Common myeloid progenitor, CD34-positive (primary cell): ENCODE measurements at regions of chr14 and their contacts with region 1.

Region 1: DNA sequence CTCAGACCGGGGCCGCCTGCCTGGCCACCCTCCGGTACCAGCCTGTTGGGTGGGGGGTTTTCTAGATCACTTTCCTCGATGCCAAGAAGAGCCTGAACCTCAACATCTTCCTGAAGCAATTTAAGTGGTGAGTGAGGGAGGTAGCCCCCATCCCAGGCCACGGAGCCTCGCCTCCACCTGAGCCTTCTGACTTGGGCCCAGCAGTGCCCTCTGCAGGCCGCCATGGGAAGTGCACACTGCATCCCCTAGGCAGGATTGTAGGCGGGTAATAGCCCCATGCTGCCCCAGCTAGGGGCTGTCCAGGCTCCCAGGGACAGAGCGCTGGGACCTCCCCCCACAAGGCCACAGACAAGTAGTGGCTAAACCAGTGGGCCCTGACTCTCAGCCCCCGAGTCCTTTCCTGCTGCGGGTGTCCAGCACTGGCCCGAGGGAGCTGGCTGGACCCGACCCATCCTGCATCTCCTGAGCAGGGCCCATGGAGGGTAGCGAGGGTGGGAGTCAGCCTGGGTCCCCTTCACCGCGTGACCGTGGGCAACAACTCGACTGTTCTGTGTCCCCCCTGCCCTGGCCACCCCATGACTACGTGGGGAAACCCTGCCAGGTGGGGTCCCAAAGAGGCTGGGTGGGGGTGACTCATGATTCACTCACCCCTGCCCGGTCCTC is 15.3 kb upstream of the ADSS1 start:
- DNase-seq: peak; percentile 67 to 81 (median 75)
- H3K4me3 ChIP-seq: no peak overlapping the region
- H3K27ac ChIP-seq: no peak overlapping the region
- H3K4me1 ChIP-seq: peaks cover 0 to 12% (median under 1%) of the 10 kb centered on the region in 4 experiments
- H3K27me3 ChIP-seq: no peaks in the 10 kb centered on the region

Region 2: GRCh38 chr14:104650057-104650981 is 58.4 kb before region 1 on chr14:
- CTCF ChIA-PET with region 1: interaction called, 13 read pairs
- POLR2A ChIA-PET with region 1: no interaction called
- DNase-seq: peak; percentile 72 to 81 (median 76)
- H3K4me3 ChIP-seq: peak overlapping the region; percentile 13 to 79 (median 64)
- H3K27ac ChIP-seq: no peak overlapping the region
- H3K4me1 ChIP-seq: peaks cover 0 to 24% (median 18%) of the 10 kb centered on the region in 4 experiments
- H3K27me3 ChIP-seq: no peaks in the 10 kb centered on the region

Region 3: GRCh38 chr14:104657101-104657524 is 51.6 kb before region 1 on chr14:
- CTCF ChIA-PET with region 1: interaction called, 13 read pairs
- POLR2A ChIA-PET with region 1: interaction called, 3 read pairs
- DNase-seq: peak; percentile 78 to 94 (median 91)
- H3K4me3 ChIP-seq: peak overlapping the region in 1 of 7 experiments; percentile 10
- H3K27ac ChIP-seq: no peak overlapping the region
- H3K4me1 ChIP-seq: peaks cover 3 to 56% (median 48%) of the 10 kb centered on the region in 4 experiments
- H3K27me3 ChIP-seq: no peaks in the 10 kb centered on the region

Region 4: GRCh38 chr14:104665657-104666522 is 42.8 kb before region 1 on chr14:
- CTCF ChIA-PET with region 1: interaction called, 10 read pairs
- POLR2A ChIA-PET with region 1: interaction called, 3 read pairs
- DNase-seq: peak in 2 of 3 donors; percentile 49 to 58
- H3K4me3 ChIP-seq: peak overlapping the region in 1 of 7 experiments; percentile 11
- H3K27ac ChIP-seq: no peak overlapping the region
- H3K4me1 ChIP-seq: peaks cover 0 to 14% (median 8%) of the 10 kb centered on the region in 4 experiments
- H3K27me3 ChIP-seq: no peaks in the 10 kb centered on the region

Region 5: DNA sequence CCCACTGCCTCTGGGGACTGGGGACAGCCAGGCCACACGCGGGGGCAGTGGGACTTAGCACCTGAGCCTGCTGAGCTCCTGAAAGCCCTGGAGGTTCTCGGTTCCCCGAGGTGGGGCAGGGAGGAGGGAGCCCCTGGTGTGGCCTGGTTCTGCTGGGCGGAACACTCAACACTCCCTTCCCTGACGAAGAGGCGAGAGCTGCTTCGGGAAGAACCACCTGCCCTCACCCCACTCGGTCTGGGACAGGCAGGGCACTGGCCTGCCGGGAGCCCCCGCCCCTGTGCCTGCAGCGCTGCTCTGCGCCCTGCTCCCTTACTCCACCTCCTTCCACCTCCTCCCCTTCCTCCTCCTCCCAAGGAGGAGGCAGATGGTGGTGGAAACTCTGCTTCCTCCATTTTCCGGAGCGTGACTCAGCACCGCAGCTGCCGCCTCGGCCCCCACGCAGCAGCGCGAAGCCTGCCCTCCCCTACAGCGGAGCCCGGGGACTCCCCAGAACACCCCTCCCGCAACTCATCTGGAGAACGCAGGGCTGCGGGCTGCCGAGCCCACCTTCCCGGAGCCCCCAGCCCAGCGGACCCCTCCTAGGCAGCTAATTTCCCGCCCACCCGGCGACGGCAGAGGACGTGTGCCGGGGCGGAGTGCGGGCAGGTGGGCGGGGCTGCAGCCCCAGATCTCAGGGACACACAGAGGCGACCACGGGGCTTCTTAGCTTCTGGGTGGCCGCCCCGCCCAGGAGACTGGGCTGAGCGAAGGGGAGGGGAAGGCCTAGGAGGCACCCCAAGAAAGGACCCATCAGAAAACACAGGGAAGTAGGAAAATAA is 31.0 kb before region 1 on chr14:
- CTCF ChIA-PET with region 1: interaction called, 13 read pairs
- POLR2A ChIA-PET with region 1: no interaction called
- DNase-seq: peak; percentile 86 to 96 (median 95)
- H3K4me3 ChIP-seq: peak overlapping the region; percentile 22 to 66 (median 54)
- H3K27ac ChIP-seq: peak overlapping the region in 1 of 2 experiments; percentile 81
- H3K4me1 ChIP-seq: peaks cover 0 to 67% (median 55%) of the 10 kb centered on the region in 4 experiments
- H3K27me3 ChIP-seq: no peaks in the 10 kb centered on the region

Region 6: DNA sequence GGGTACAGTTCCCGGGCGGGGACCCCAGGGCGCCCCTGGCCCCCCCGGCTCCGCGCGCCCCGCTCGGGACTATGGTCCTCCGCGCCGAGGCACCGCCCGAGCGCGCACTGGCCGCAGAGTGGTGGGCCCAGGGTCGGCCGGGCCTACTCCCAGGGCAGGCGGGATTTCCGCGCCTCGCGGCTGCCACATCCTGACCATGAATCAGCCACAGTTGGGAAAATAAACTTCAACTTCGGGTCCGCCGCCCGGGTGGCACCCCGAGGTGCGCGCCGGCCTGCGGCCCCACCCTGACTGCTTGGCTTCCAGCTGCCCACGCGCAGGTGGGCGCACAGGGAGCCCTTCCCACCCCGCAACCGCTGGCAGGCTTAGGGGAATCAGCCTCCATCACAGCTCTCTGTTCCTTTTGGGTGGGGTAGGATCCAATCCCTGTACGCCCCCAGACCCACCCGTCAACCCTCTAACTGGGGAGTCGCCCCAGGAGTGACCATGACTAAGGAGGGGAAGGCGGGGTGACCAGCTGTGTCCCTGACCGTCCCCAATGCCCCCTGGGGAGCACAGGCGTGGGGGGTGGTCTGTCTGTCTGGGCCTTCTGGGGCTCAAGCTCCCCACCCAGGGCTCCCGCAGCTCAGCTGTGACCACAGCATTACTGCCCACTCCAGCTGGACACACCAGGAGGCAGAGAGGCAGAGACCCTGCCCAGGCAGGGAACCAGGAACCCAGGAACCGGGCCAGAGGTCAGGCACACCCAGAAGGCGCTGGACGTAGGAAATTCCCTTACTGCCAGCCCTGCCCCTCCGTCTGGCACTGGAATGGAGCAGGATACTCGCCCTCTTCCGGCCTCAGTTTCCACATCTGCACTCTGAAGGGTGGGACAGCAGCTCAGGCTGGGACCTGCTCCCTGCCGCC is 18.6 kb before region 1 on chr14:
- CTCF ChIA-PET with region 1: interaction called, 11 read pairs
- POLR2A ChIA-PET with region 1: no interaction called
- DNase-seq: peak in 1 of 3 donors; percentile 14
- H3K4me3 ChIP-seq: peak overlapping the region; percentile 57 to 83 (median 75)
- H3K27ac ChIP-seq: peak overlapping the region in 1 of 2 experiments; percentile 54
- H3K4me1 ChIP-seq: peaks cover 0 to 68% (median 62%) of the 10 kb centered on the region in 4 experiments
- H3K27me3 ChIP-seq: no peaks in the 10 kb centered on the region

Region 7: GRCh38 chr14:104697892-104698583 is 10.7 kb before region 1 on chr14:
- CTCF ChIA-PET with region 1: interaction called, 11 read pairs
- POLR2A ChIA-PET with region 1: no interaction called
- DNase-seq: no peak
- H3K4me3 ChIP-seq: no peak overlapping the region
- H3K27ac ChIP-seq: no peak overlapping the region
- H3K4me1 ChIP-seq: peaks cover 0 to 38% (median 29%) of the 10 kb centered on the region in 4 experiments
- H3K27me3 ChIP-seq: no peaks in the 10 kb centered on the region

Region 8: GRCh38 chr14:104743461-104744380 is 35.0 kb after region 1 on chr14:
- CTCF ChIA-PET with region 1: no interaction called
- POLR2A ChIA-PET with region 1: no interaction called
- DNase-seq: no peak
- H3K4me3 ChIP-seq: no peak overlapping the region
- H3K27ac ChIP-seq: no peak overlapping the region
- H3K4me1 ChIP-seq: peaks cover 0 to 19% (median 10%) of the 10 kb centered on the region in 4 experiments
- H3K27me3 ChIP-seq: no peaks in the 10 kb centered on the region